ENCODE measurements at regions of chr1 and their contacts with region 1.

Region 1: DNA sequence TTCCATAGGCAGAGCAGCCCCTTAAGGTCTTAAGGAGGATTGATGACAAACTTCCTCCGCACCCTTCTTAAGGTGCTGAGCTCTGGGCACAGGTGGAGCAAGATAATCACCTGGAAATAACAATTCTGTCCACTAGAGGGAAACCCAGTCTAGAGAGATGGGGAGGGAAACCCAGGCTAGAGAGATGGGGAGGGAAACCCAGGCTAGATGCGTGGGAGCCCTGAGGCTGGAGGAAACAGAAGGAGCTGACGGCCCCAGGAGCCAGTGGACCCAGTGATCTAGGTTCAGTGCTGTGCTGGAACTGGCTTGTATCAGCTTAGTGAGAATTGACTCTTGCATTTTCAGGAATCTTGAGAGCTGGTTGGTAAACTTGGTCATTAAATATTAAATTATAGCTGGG is 17.8 kb upstream of the MYCL start:
- DNase-seq: peak; percentile 90
- H3K4me3 Mint-ChIP-seq: no peak overlapping the region
- H3K27ac Mint-ChIP-seq: no peak overlapping the region
- H3K4me1 Mint-ChIP-seq: peaks cover 5% of the 10 kb centered on the region
- H3K27me3 Mint-ChIP-seq: no peaks in the 10 kb centered on the region
- CTCF ChIP-seq: peak; percentile 78

Region 2: GRCh38 chr1:39501666-39502065 is 417.9 kb before region 1 on chr1:
- CTCF ChIA-PET with region 1: no interaction called
- POLR2A ChIA-PET with region 1: no interaction called
- intact Hi-C with region 1: no loop called
- DNase-seq: peak; percentile 90
- H3K4me3 Mint-ChIP-seq: no peak overlapping the region
- H3K27ac Mint-ChIP-seq: no peak overlapping the region
- H3K4me1 Mint-ChIP-seq: peaks cover 6% of the 10 kb centered on the region
- H3K27me3 Mint-ChIP-seq: no peaks in the 10 kb centered on the region
- CTCF ChIP-seq: no peak

Region 3: GRCh38 chr1:39615086-39615673 is 304.4 kb before region 1 on chr1:
- CTCF ChIA-PET with region 1: no interaction called
- POLR2A ChIA-PET with region 1: no interaction called
- intact Hi-C with region 1: no loop called
- DNase-seq: no peak
- H3K4me3 Mint-ChIP-seq: no peak overlapping the region
- H3K27ac Mint-ChIP-seq: no peak overlapping the region
- H3K4me1 Mint-ChIP-seq: no peaks in the 10 kb centered on the region
- H3K27me3 Mint-ChIP-seq: no peaks in the 10 kb centered on the region
- CTCF ChIP-seq: no peak

Region 4: GRCh38 chr1:39901698-39902459 is 17.7 kb before region 1 on chr1 and contains the start of gene MYCL:
- CTCF ChIA-PET with region 1: interaction called, 27 read pairs
- POLR2A ChIA-PET with region 1: no interaction called
- intact Hi-C with region 1: no loop called
- DNase-seq: peak; percentile 79
- H3K4me3 Mint-ChIP-seq: peak within 1 kb of the TSS; percentile 68
- H3K27ac Mint-ChIP-seq: no peak within 1 kb of the TSS
- H3K4me1 Mint-ChIP-seq: no peaks in the 10 kb centered on the region
- H3K27me3 Mint-ChIP-seq: peaks cover 14% of the 10 kb centered on the region
- CTCF ChIP-seq: peak; percentile 68
- total RNA-seq, gene MYCL: 0.63 and 1.1 TPM in 2 replicates

Region 5: GRCh38 chr1:39933956-39934941 is 14.7 kb after region 1 on chr1:
- CTCF ChIA-PET with region 1: interaction called, 23 read pairs
- POLR2A ChIA-PET with region 1: interaction called, 10 read pairs
- intact Hi-C with region 1: no loop called
- DNase-seq: peak; percentile 100
- H3K4me3 Mint-ChIP-seq: peak overlapping the region; percentile 15
- H3K27ac Mint-ChIP-seq: peak overlapping the region; percentile 71
- H3K4me1 Mint-ChIP-seq: peaks cover 32% of the 10 kb centered on the region
- H3K27me3 Mint-ChIP-seq: no peaks in the 10 kb centered on the region
- CTCF ChIP-seq: no peak

Region 6: DNA sequence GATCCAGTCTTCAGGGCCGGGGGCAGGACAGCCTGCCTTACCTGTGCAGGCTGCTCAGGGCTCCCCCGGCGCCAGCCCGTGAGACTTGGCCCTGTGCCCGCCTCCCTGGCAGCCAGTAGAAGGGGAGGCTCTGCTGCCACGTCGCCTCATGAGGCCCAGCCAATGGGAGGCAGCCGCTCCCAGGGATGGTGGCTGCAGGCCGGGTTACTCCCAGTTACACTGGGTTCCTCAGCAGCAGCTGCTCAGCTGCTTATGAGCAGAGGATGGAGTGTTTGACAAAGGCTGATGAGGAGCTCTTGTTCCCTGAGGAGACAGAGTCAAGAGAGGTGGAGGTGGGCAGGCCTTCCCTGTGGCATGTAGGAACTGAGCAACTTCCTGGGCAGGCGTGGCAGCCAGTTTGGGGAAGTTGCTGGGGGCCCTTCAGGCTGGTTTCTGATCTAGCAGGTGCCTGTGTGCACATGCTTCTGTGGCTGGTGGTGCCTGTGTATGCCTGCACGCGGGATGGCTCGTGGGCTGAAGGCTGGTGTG is 41.0 kb after region 1 on chr1:
- CTCF ChIA-PET with region 1: interaction called, 373 read pairs
- POLR2A ChIA-PET with region 1: interaction called, 52 read pairs
- intact Hi-C with region 1: loop called (anchors 2 kb)
- DNase-seq: peak; percentile 84
- H3K4me3 Mint-ChIP-seq: no peak overlapping the region
- H3K27ac Mint-ChIP-seq: peak overlapping the region; percentile 39
- H3K4me1 Mint-ChIP-seq: peaks cover 28% of the 10 kb centered on the region
- H3K27me3 Mint-ChIP-seq: no peaks in the 10 kb centered on the region
- CTCF ChIP-seq: no peak